HepG2 (cell line): ENCODE measurements at regions of chr11 and their contacts with region 1.

Region 1: GRCh38 chr11:65888163-65888814 is at the start of gene FIBP:
- DNase-seq: peak; percentile 90
- ATAC-seq: peak; percentile 74
- H3K4me3 ChIP-seq: peak within 1 kb of the TSS; percentile 74 to 91 (median 87)
- H3K27ac ChIP-seq: peak within 1 kb of the TSS; percentile 58
- H3K4me1 ChIP-seq: peaks cover 72% of the 10 kb centered on the region
- H3K27me3 ChIP-seq: no peaks in the 10 kb centered on the region; a peak in 1 of 5 replicates
- CTCF ChIP-seq: peak; percentile 94
- EP300 ChIP-seq: peak in 1 of 2 experiments; percentile 60; a peak in 1 of 4 replicates
- POLR2A ChIP-seq: peak in 1 of 2 experiments; percentile 80; a peak in 2 of 4 replicates
- RAD21 ChIP-seq: peak; percentile 78; the same call in 1 of the 2 replicates
- total RNA-seq, gene FIBP: 62.1 and 66.0 TPM in 2 replicates

Region 2: GRCh38 chr11:65630215-65630614 is 258.1 kb before region 1 on chr11:
- CTCF ChIA-PET with region 1: no interaction called
- POLR2A ChIA-PET with region 1: no interaction called
- in situ Hi-C with region 1: no loop called
- intact Hi-C with region 1: no loop called
- DNase-seq: no peak
- ATAC-seq: no peak
- H3K4me3 ChIP-seq: no peak overlapping the region
- H3K27ac ChIP-seq: no peak overlapping the region
- H3K4me1 ChIP-seq: no peaks in the 10 kb centered on the region
- H3K27me3 ChIP-seq: no peaks in the 10 kb centered on the region
- CTCF ChIP-seq: no peak
- EP300 ChIP-seq: no peak
- POLR2A ChIP-seq: no peak
- RAD21 ChIP-seq: no peak

Region 3: DNA sequence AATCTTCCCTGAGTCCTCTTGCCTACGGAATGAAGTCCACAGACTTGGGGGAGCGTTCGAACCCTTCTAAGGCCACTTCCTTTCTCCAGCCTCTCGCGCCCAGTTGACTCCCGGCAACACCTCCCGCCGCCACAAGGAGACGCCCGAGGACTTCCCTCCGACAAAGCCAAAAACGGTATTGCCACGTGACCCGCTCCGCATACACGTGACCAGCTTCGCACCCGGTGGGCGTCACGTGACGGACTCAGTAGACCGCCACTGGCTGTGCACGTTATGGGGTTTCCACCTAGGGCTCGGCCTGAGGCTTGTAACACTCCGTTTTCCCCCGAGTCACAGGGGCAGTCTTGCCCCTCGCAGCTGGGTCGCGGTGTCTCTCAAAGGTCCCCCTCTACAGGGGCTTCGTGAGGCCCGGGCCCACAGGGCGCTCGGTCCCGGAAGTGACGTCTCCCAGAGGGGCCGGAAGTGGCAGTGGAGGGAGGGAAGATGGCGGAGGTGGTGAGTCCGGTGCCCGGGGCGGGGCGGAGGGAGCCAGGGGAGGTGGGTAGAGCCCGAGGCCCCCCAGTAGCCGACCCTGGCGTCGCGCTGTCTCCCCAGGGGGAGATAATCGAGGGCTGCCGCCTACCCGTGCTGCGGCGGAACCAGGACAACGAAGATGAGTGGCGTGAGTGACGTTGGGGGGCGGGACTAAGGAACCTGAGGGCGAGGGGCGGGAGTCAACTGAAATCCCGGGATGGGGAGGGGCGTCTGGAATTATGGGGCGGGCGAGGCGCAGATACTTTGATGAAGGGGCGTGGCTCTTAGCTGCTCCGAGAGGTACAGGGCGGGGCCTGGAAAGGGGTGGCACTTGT is 176.3 kb before region 1 on chr11 and contains the start of gene KAT5:
- CTCF ChIA-PET with region 1: interaction called, 7 read pairs
- POLR2A ChIA-PET with region 1: interaction called, 16 read pairs
- in situ Hi-C with region 1: no loop called
- intact Hi-C with region 1: no loop called
- DNase-seq: peak; percentile 95
- ATAC-seq: peak; percentile 85
- H3K4me3 ChIP-seq: peak within 1 kb of the TSS; percentile 61 to 80 (median 66)
- H3K27ac ChIP-seq: peak within 1 kb of the TSS; percentile 96
- H3K4me1 ChIP-seq: peaks cover 27% of the 10 kb centered on the region
- H3K27me3 ChIP-seq: no peaks in the 10 kb centered on the region; a peak in 1 of 5 replicates
- CTCF ChIP-seq: peak; percentile 99
- EP300 ChIP-seq: peak in 1 of 2 experiments; percentile 61; a peak in 3 of 4 replicates
- POLR2A ChIP-seq: peak in 1 of 2 experiments; percentile 55; a peak in 2 of 4 replicates
- RAD21 ChIP-seq: peak; percentile 94
- total RNA-seq, gene KAT5: 45.4 and 48.3 TPM in 2 replicates

Region 4: GRCh38 chr11:65873318-65874156 is 14.8 kb before region 1 on chr11:
- CTCF ChIA-PET with region 1: interaction called, 9 read pairs
- POLR2A ChIA-PET with region 1: interaction called, 26 read pairs
- in situ Hi-C with region 1: no loop called
- intact Hi-C with region 1: no loop called
- DNase-seq: peak; percentile 80
- ATAC-seq: peak; percentile 45
- H3K4me3 ChIP-seq: peak overlapping the region; percentile 58 to 73 (median 63); a peak in 5 of 6 replicates
- H3K27ac ChIP-seq: peak overlapping the region; percentile 38
- H3K4me1 ChIP-seq: peaks cover 39% of the 10 kb centered on the region
- H3K27me3 ChIP-seq: no peaks in the 10 kb centered on the region; a peak in 1 of 5 replicates
- CTCF ChIP-seq: no peak; the same call in 1 of the 2 replicates
- EP300 ChIP-seq: no peak
- POLR2A ChIP-seq: peak; percentile 15 to 77; a peak in 2 of 4 replicates
- RAD21 ChIP-seq: no peak

Region 5: GRCh38 chr11:65911682-65912568 is 23.6 kb after region 1 on chr11:
- CTCF ChIA-PET with region 1: no interaction called
- POLR2A ChIA-PET with region 1: interaction called, 59 read pairs
- in situ Hi-C with region 1: no loop called
- intact Hi-C with region 1: no loop called
- DNase-seq: no peak
- ATAC-seq: peak; percentile 31
- H3K4me3 ChIP-seq: peak overlapping the region in 1 of 3 experiments; percentile 21; a peak in 1 of 6 replicates
- H3K27ac ChIP-seq: no peak overlapping the region
- H3K4me1 ChIP-seq: peaks cover 60% of the 10 kb centered on the region
- H3K27me3 ChIP-seq: peaks cover 0 to 3% of the 10 kb centered on the region in 2 experiments; a peak in 1 of 5 replicates
- CTCF ChIP-seq: peak; percentile 53
- EP300 ChIP-seq: no peak
- POLR2A ChIP-seq: no peak
- RAD21 ChIP-seq: no peak

Region 6: GRCh38 chr11:65932558-65932919 is 44.2 kb after region 1 on chr11:
- CTCF ChIA-PET with region 1: no interaction called
- POLR2A ChIA-PET with region 1: interaction called, 3 read pairs
- in situ Hi-C with region 1: no loop called
- intact Hi-C with region 1: loop called (anchors 5 kb)
- DNase-seq: no peak
- ATAC-seq: no peak
- H3K4me3 ChIP-seq: no peak overlapping the region
- H3K27ac ChIP-seq: no peak overlapping the region
- H3K4me1 ChIP-seq: peaks cover 46% of the 10 kb centered on the region
- H3K27me3 ChIP-seq: peaks cover 0 to 3% of the 10 kb centered on the region in 2 experiments; a peak in 1 of 5 replicates
- CTCF ChIP-seq: no peak
- EP300 ChIP-seq: no peak
- POLR2A ChIP-seq: no peak
- RAD21 ChIP-seq: no peak

Region 7: GRCh38 chr11:65988791-65989592 is 100.7 kb after region 1 on chr11:
- CTCF ChIA-PET with region 1: interaction called, 77 read pairs
- POLR2A ChIA-PET with region 1: interaction called, 5 read pairs
- in situ Hi-C with region 1: loop called (anchors 5 kb)
- intact Hi-C with region 1: loop called (anchors 1 kb)
- DNase-seq: peak; percentile 92
- ATAC-seq: peak; percentile 98
- H3K4me3 ChIP-seq: no peak overlapping the region
- H3K27ac ChIP-seq: no peak overlapping the region
- H3K4me1 ChIP-seq: peaks cover 4% of the 10 kb centered on the region
- H3K27me3 ChIP-seq: no peaks in the 10 kb centered on the region
- CTCF ChIP-seq: peak; percentile 97
- EP300 ChIP-seq: no peak
- POLR2A ChIP-seq: no peak
- RAD21 ChIP-seq: peak; percentile 93

Region 8: GRCh38 chr11:66080055-66080817 is 191.9 kb after region 1 on chr11:
- CTCF ChIA-PET with region 1: no interaction called
- POLR2A ChIA-PET with region 1: no interaction called
- in situ Hi-C with region 1: no loop called
- intact Hi-C with region 1: no loop called
- DNase-seq: peak; percentile 34
- ATAC-seq: no peak; the same call in 1 of the 3 replicates
- H3K4me3 ChIP-seq: no peak overlapping the region
- H3K27ac ChIP-seq: no peak overlapping the region
- H3K4me1 ChIP-seq: peaks cover 45% of the 10 kb centered on the region
- H3K27me3 ChIP-seq: no peaks in the 10 kb centered on the region
- CTCF ChIP-seq: no peak
- EP300 ChIP-seq: no peak
- POLR2A ChIP-seq: no peak
- RAD21 ChIP-seq: no peak